ENCODE measurements at regions of chr5 and their contacts with region 1.

Region 1: DNA sequence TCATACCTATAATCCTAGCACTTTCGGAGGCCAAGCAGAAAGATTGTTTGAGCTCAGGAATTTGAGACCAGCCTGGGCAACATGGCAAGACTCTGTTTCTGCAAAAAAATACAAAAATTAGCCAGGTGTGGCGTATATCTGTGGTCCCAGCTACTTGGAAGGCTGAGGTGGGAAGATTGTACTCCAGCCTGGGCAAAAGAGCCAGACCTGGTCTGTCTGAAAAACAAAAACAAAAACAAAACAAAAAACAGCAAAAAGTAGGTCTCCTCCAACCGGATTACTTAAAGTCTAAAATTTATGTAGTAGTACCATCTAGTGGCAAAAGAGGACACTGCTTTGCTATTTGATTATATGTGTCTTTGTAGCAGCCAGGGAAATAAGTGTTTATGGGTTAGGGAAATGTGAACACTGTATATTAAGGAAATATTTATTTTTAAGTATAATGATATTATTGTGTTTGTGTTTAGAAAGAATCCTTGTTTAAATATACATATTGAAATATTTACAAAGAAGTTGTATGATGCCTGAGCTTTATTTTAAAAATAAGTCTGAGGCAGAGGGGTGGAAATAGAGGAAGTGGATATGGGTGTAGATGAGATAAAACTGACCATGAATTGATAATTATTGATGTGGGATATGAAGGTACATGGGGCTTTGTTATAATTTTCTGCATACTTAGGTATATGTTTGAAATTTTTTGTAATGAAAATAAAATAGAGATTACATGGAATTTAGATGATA is 20.0 kb downstream of the APC start:
- DNase-seq: no peak
- ATAC-seq: peak; percentile 88
- H3K4me3 Mint-ChIP-seq: no peak overlapping the region
- H3K27ac Mint-ChIP-seq: no peak overlapping the region
- H3K4me1 Mint-ChIP-seq: no peaks in the 10 kb centered on the region
- H3K27me3 Mint-ChIP-seq: no peaks in the 10 kb centered on the region

Region 2: GRCh38 chr5:112174959-112175594 is 582.6 kb before region 1 on chr5:
- CTCF ChIA-PET with region 1: interaction called, 14 read pairs
- POLR2A ChIA-PET with region 1: no interaction called
- DNase-seq: peak; percentile 50
- ATAC-seq: peak; percentile 85
- H3K4me3 Mint-ChIP-seq: no peak overlapping the region
- H3K27ac Mint-ChIP-seq: no peak overlapping the region
- H3K4me1 Mint-ChIP-seq: no peaks in the 10 kb centered on the region
- H3K27me3 Mint-ChIP-seq: peaks cover 12% of the 10 kb centered on the region

Region 3: GRCh38 chr5:112479407-112479806 is 278.2 kb before region 1 on chr5:
- CTCF ChIA-PET with region 1: no interaction called
- POLR2A ChIA-PET with region 1: no interaction called
- DNase-seq: no peak
- ATAC-seq: no peak
- H3K4me3 Mint-ChIP-seq: no peak overlapping the region
- H3K27ac Mint-ChIP-seq: no peak overlapping the region
- H3K4me1 Mint-ChIP-seq: no peaks in the 10 kb centered on the region
- H3K27me3 Mint-ChIP-seq: no peaks in the 10 kb centered on the region

Region 4: GRCh38 chr5:112551419-112552032 is 206.1 kb before region 1 on chr5:
- CTCF ChIA-PET with region 1: interaction called, 76 read pairs
- POLR2A ChIA-PET with region 1: no interaction called
- DNase-seq: peak; percentile 56
- ATAC-seq: peak; percentile 51
- H3K4me3 Mint-ChIP-seq: no peak overlapping the region
- H3K27ac Mint-ChIP-seq: no peak overlapping the region
- H3K4me1 Mint-ChIP-seq: no peaks in the 10 kb centered on the region
- H3K27me3 Mint-ChIP-seq: peaks cover 7% of the 10 kb centered on the region

Region 5: DNA sequence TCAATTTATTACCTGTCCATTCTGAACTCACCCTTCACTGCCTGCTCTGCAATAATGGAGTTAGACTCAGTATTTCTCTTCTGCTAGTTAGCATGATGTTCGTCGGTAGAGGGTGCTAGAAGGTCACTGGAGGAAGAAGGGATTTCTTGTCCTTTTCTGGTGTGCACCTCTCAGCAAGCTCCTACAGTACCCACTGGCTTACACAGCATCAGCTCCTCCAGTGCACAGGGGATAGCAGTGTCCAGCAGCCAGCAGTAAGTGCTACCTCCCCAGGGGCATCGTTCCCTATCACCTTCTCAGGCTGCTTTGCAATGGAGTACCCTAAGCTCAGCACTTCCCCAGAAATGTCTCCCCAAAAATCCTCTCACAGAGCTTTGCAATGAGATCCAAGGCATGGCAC is 65.9 kb before region 1 on chr5:
- CTCF ChIA-PET with region 1: interaction called, 42 read pairs
- POLR2A ChIA-PET with region 1: no interaction called
- DNase-seq: peak; percentile 50
- ATAC-seq: peak; percentile 57
- H3K4me3 Mint-ChIP-seq: no peak overlapping the region
- H3K27ac Mint-ChIP-seq: no peak overlapping the region
- H3K4me1 Mint-ChIP-seq: no peaks in the 10 kb centered on the region
- H3K27me3 Mint-ChIP-seq: peaks cover 33% of the 10 kb centered on the region

Region 6: DNA sequence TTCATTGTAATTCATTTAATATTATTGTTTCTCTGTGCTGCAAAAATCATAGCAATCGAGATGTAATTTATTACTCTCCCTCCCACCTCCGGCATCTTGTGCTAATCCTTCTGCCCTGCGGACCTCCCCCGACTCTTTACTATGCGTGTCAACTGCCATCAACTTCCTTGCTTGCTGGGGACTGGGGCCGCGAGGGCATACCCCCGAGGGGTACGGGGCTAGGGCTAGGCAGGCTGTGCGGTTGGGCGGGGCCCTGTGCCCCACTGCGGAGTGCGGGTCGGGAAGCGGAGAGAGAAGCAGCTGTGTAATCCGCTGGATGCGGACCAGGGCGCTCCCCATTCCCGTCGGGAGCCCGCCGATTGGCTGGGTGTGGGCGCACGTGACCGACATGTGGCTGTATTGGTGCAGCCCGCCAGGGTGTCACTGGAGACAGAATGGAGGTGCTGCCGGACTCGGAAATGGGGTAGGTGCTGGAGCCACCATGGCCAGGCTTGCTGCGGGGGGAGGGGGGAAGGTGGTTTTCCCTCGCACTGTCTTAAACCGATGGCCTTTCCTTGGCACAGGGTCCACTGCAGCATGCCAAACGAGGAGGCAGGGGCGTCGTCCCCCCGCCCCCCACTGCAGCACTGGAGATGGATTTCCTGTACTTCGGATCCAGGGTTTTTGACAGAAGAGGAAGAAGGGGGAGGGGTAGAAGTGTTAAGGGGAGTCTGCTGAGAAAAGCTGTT is 20.0 kb before region 1 on chr5 and contains the start of gene APC:
- CTCF ChIA-PET with region 1: interaction called, 15 read pairs
- POLR2A ChIA-PET with region 1: no interaction called
- DNase-seq: peak; percentile 87
- ATAC-seq: peak; percentile 100
- H3K4me3 Mint-ChIP-seq: peak within 1 kb of the TSS; percentile 88
- H3K27ac Mint-ChIP-seq: peak within 1 kb of the TSS; percentile 73
- H3K4me1 Mint-ChIP-seq: peaks cover 12% of the 10 kb centered on the region
- H3K27me3 Mint-ChIP-seq: no peaks in the 10 kb centered on the region
- total RNA-seq, gene APC: 21.5 to 24.5 TPM

Measured in activated CD8-positive, alpha-beta T cell treated with anti-CD3 and anti-CD28 coated beads, Interleukin-2, amount 10 ng/mL, durations not matched to agents 7 days and 5 days (primary cell).